ENCODE measurements at regions of chr9 and their contacts with region 1.

Region 1: GRCh38 chr9:90102292-90102901 is 497.6 kb downstream of the GADD45G start:
- DNase-seq: peak; percentile 87
- H3K4me3 Mint-ChIP-seq: no peak overlapping the region
- H3K27ac Mint-ChIP-seq: no peak overlapping the region
- H3K4me1 Mint-ChIP-seq: peaks cover 9% of the 10 kb centered on the region
- H3K27me3 Mint-ChIP-seq: peaks cover 14% of the 10 kb centered on the region

Region 2: DNA sequence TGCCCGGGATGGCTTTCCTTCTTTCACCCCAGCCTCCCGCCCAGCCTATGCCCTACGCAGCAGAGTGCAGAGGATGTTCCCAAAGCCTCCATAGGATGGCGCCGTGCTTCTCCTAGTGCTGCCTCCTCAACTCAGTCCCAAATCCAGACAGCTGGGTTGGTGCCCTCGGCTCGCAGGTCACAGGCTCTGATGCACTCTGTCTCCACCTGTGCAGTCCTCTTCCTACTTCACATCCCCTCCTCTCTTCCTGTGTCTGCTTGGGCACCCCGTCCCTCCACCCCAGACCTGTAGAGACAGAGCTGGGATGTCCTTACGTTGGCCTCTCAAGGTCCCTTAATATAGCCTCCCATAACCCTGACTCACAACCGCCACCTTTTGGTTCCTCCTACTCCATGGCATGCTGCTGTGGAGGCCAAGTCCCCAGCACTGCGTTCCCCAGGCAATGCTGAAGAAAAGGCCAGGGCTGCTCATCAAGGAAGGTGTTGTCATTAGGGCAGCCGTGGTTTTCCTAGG is 183.2 kb before region 1 on chr9:
- CTCF ChIA-PET with region 1: interaction called, 16 read pairs
- DNase-seq: peak; percentile 64
- H3K4me3 Mint-ChIP-seq: no peak overlapping the region
- H3K27ac Mint-ChIP-seq: peak overlapping the region; percentile 8
- H3K4me1 Mint-ChIP-seq: peaks cover 12% of the 10 kb centered on the region
- H3K27me3 Mint-ChIP-seq: peaks cover 55% of the 10 kb centered on the region

Region 3: DNA sequence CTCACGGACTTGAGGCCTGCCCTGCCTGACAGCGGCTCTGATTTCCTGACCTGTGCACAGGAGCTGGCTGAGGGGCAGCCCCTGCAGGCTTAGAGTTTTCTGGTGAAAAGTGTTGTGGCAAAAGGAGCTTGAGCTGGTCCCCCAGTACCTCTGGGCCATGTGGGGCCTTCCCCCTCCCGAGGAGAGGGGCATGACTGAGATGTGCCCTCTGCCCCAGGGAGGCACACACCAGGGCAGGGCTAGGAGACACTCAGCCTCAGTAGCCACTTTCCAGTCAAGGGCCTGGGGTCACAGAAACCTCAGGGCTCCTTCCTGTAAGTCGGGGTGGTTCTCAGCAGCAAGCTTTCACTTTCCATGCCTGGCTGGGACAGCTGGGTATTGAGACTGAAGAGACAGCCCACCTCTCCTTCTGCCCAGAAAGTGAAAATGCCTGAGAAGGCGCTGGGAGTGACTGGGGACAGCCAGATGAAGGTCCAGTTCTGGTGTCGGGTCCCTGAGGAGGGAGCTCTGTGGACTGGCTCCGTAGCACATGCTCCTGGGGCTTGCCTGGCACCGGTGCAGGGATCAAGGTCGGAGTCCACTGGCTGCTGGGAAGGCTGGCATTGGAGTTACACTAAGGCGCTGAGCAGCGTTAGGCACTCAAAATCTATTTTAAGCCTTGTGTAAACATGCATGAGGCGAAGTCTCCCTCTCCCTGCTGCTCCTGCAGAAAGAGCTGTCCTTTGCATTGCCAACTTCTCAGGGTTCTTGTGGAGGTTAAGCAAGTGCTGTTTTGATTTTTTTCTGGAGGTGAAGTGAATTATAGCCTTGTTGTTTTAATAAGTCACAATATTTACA is 102.6 kb before region 1 on chr9:
- CTCF ChIA-PET with region 1: interaction called, 13 read pairs
- DNase-seq: peak; percentile 85
- H3K4me3 Mint-ChIP-seq: peak overlapping the region; percentile 70
- H3K27ac Mint-ChIP-seq: peak overlapping the region; percentile 93
- H3K4me1 Mint-ChIP-seq: peaks cover 27% of the 10 kb centered on the region
- H3K27me3 Mint-ChIP-seq: peaks cover 13% of the 10 kb centered on the region

Region 4: DNA sequence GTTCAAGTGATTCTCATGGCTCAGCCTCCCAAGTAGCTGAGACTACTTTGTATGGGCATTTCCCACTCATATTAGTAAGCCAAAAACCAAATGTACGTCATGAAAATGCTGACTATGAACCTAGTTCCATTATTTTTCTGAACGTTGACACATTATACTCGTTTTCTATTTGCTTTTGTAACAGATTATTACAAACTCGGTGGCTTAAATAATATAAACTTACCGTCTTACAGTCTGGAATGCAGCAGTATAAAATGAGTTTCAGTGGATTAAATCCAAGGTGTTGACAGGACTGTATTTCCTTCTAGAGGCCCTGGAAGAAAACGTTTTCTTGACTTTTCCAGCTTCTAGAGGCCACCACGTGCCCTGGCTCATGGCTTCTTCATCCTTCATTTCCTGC is 19.4 kb after region 1 on chr9:
- CTCF ChIA-PET with region 1: no interaction called
- DNase-seq: no peak
- H3K4me3 Mint-ChIP-seq: no peak overlapping the region
- H3K27ac Mint-ChIP-seq: no peak overlapping the region
- H3K4me1 Mint-ChIP-seq: no peaks in the 10 kb centered on the region
- H3K27me3 Mint-ChIP-seq: peaks cover 11% of the 10 kb centered on the region

Region 5: GRCh38 chr9:90872835-90873294 is 770.5 kb after region 1 on chr9:
- CTCF ChIA-PET with region 1: no interaction called
- DNase-seq: no peak
- H3K4me3 Mint-ChIP-seq: no peak overlapping the region
- H3K27ac Mint-ChIP-seq: no peak overlapping the region
- H3K4me1 Mint-ChIP-seq: no peaks in the 10 kb centered on the region
- H3K27me3 Mint-ChIP-seq: peaks cover 11% of the 10 kb centered on the region